Panc1 (cell line): ENCODE measurements at regions of chr21 and their contacts with region 1.

Region 1: GRCh38 chr21:18954441-18954844 is 550.9 kb upstream of the TMPRSS15 start:
- DNase-seq: no peak
- ATAC-seq: no peak
- H3K4me3 ChIP-seq: no peak overlapping the region
- H3K27ac ChIP-seq: no peak overlapping the region
- H3K4me1 ChIP-seq: no peaks in the 10 kb centered on the region
- H3K27me3 ChIP-seq: no peaks in the 10 kb centered on the region
- CTCF ChIP-seq: no peak

Region 2: GRCh38 chr21:18524097-18524880 is 430.2 kb before region 1 on chr21:
- CTCF ChIA-PET with region 1: interaction called, 10 read pairs
- POLR2A ChIA-PET with region 1: no interaction called
- in situ Hi-C with region 1: no loop called
- intact Hi-C with region 1: no loop called
- DNase-seq: no peak
- ATAC-seq: no peak
- H3K4me3 ChIP-seq: no peak overlapping the region
- H3K27ac ChIP-seq: no peak overlapping the region
- H3K4me1 ChIP-seq: no peaks in the 10 kb centered on the region
- H3K27me3 ChIP-seq: no peaks in the 10 kb centered on the region
- CTCF ChIP-seq: no peak